Motor neuron (in vitro differentiated cells): ENCODE measurements at regions of chr6 and their contacts with region 1.

Region 1: GRCh38 chr6:154805288-154805911 is 72.2 kb downstream of the SCAF8 start:
- ATAC-seq: peak in 2 of 8 experiments; percentile 24 to 31
- H3K4me3 ChIP-seq: no peak overlapping the region
- H3K27ac ChIP-seq: no peak overlapping the region
- H3K4me1 ChIP-seq: no peaks in the 10 kb centered on the region

Region 2: DNA sequence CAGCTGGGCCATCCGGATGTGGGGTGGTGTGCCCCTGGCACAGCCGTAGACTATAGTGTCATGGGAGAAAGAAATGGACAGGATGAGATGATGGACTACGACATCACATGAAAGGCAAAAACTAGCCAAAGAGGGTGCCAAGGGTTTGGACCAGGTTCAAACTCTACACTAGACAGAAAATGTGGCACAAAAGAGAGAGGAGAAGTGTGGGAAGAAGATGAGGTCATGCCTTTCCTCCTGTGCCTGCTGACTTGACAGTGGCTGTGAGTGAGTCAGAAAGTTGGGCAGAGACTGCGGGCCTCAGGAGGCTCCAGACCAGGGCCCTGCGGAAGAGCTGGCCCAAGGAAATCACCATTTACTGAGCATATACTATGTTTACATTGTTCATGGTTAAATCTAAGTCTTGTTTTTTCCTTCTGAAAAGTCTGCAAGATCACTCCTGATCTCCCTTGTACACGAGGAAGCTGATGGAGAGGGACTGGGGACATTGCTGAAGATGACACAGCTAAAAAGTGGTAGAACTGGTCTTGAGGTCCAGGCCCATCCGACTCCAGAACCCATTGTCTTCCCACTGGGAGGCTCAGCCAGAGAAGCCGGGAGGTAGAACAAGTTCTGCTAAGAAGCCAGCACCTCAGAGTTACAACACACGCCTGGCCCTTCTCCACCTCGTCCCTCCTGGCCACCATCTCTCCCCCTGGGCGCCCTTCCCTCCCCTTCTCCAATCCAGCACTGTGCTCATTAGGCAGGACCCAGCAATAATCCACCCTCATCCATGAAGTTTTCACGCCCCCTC is 330.6 kb before region 1 on chr6:
- in situ Hi-C with region 1: loop called in 1 of 9 experiments (anchors 25 kb)
- ATAC-seq: peak in 2 of 8 experiments; percentile 47 to 66
- H3K4me3 ChIP-seq: no peak overlapping the region
- H3K27ac ChIP-seq: no peak overlapping the region
- H3K4me1 ChIP-seq: peaks cover 19 to 23% of the 10 kb centered on the region in 2 donors

Region 3: DNA sequence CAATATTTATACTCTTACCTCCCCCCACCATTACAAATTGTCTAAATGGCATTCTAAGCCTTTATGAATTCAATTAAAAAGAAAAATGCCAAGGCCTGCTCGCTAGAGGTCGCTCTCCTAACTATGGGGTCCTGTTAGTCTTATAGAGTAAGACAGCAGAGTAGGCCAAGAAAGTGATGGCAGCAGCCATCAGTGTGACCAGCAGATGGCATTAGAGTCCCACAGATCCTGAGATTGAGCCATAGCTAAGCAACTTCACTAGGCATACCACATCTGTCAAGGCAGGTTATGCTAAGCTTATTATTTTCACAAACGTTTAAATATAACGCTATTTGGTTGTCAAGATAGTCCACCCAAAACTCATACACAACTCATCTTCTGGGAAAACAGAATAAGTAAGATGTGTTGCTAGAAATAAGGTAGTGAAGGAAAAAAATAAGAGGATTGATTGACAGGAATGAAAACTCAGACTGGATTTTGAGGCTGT is 129.8 kb before region 1 on chr6:
- in situ Hi-C with region 1: loop called in 3 of 9 experiments (anchors 10 to 25 kb)
- ATAC-seq: peak; percentile 99 to 100 (median 100)
- H3K4me3 ChIP-seq: no peak overlapping the region
- H3K27ac ChIP-seq: no peak overlapping the region
- H3K4me1 ChIP-seq: no peaks in the 10 kb centered on the region